ENCODE measurements at regions of chr9 and their contacts with region 1.

Region 1: GRCh38 chr9:36632892-36633291 is 60.2 kb downstream of the MELK start:
- DNase-seq: no peak
- ATAC-seq: no peak
- H3K4me3 Mint-ChIP-seq: no peak overlapping the region
- H3K27ac Mint-ChIP-seq: no peak overlapping the region
- H3K4me1 Mint-ChIP-seq: no peaks in the 10 kb centered on the region
- H3K27me3 Mint-ChIP-seq: no peaks in the 10 kb centered on the region

Region 2: GRCh38 chr9:36728651-36729520 is 96.0 kb after region 1 on chr9:
- CTCF ChIA-PET with region 1: interaction called, 30 read pairs
- POLR2A ChIA-PET with region 1: no interaction called
- intact Hi-C with region 1: loop called (anchors 1 kb)
- DNase-seq: peak; percentile 86
- ATAC-seq: peak; percentile 69
- H3K4me3 Mint-ChIP-seq: no peak overlapping the region
- H3K27ac Mint-ChIP-seq: no peak overlapping the region
- H3K4me1 Mint-ChIP-seq: no peaks in the 10 kb centered on the region
- H3K27me3 Mint-ChIP-seq: no peaks in the 10 kb centered on the region

Measured in activated CD4-positive, alpha-beta T cell treated with anti-CD3 and anti-CD28 coated beads for 36 hours (primary cell).